ENCODE measurements at regions of chr19 and their contacts with region 1.

Region 1: DNA sequence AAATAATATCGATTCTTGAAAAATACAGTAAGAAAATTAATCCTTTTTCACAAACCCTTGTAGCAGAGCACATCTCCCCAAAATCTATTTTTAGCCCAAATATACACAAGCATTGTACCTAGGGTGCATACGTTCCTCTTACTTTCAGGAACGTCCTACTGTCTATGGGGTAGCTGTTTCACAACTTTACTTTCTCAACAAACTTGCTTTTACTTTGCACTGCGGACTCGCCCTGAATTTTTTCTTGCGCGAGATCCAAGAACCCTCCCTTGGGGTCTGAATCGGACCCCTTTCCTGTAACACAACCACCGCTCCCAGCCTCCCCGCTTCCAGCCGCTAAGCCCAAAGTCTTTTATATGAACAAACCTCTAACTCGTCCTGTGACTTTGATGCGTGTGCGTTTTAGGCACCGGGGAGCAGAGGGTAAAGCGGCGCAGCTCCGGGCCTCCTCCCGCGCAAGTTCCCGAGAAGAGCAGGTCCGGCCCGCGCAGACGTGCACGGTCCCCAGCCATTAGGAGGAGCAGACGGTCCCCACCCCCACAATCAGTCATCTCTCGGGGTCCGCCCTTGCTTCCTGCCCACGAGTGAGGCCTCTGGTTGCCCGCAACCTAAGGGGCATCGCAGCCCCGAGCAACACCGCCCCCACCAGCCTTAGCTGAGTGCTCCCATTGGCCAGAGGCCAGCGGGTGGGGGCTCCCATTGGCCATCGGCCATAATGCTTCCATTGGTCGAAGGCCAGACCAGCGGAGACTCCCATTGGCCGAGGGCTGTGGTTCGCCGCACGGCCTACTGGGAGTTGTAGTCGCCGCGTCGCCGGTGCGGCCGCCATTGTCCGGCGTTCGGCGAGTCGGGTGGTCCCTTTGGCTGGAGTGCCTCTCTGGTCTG is at the start of gene ZNF8:
- DNase-seq: peak; percentile 84 to 96 (median 93)
- ATAC-seq: peak; percentile 99
- H3K4me3 ChIP-seq: peak within 1 kb of the TSS; percentile 93
- H3K4me3 Mint-ChIP-seq: peak within 1 kb of the TSS; percentile 89 to 99 (median 95)
- H3K27ac ChIP-seq: peak within 1 kb of the TSS; percentile 80
- H3K27ac Mint-ChIP-seq: peak within 1 kb of the TSS; percentile 88 to 97 (median 96)
- H3K4me1 ChIP-seq: peaks cover 12 to 15% of the 10 kb centered on the region in 2 donors
- H3K4me1 Mint-ChIP-seq: peaks cover 28 to 63% (median 43%) of the 10 kb centered on the region in 7 donors
- H3K27me3 ChIP-seq: no peaks in the 10 kb centered on the region
- H3K27me3 Mint-ChIP-seq: no peaks in the 10 kb centered on the region
- total RNA-seq, gene ZNF8: 5.2 to 10.5 (median 10.0) TPM

Region 2: DNA sequence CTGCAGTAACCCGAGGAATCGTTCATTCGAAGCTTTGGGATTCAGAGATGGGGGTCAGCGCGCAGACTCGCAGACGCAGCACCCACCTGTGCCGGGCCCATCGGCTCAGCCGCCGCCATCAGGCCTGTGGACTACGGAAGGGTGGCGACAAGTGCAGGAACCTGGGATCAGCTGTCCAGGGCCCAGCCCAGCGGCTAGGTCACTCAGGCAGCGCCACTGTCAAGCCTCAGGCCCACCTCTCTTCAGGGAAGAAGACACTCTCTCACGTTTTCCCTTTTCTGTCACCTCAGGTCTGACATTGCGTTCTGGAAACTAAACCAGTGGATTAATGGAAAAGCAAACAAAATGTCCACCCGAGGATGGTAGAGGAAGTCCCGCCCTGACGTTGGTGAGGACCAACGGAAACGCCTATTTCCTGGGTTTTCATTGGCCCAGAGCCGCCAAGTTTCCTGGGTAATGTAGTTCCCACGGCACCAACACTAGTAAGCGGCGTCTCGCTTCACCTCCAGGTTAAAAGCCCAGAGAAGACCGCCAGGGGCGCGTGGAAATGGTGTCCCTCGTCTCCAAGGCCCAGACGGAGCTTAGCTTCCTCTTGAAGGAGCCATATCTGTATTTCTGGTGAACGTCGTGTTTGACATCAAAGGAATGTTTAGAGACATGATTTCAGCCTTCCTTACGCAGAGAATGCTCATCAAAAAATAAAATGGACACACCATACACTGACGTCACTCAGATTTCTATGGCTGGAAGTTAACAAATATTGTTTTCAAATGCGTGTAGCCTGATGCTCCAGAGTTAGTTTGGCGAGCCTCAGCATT is 801.0 kb before region 1 on chr19 and contains the start of gene ZNF772:
- CTCF ChIA-PET with region 1: no interaction called
- POLR2A ChIA-PET with region 1: no interaction called
- intact Hi-C with region 1: loop called in 1 of 2 experiments (anchors 5 kb)
- DNase-seq: peak; percentile 55 to 96 (median 88)
- ATAC-seq: peak; percentile 99
- H3K4me3 ChIP-seq: peak within 1 kb of the TSS; percentile 80
- H3K4me3 Mint-ChIP-seq: peak within 1 kb of the TSS; percentile 87 to 95 (median 92)
- H3K27ac ChIP-seq: peak within 1 kb of the TSS; percentile 77
- H3K27ac Mint-ChIP-seq: peak within 1 kb of the TSS; percentile 84 to 96 (median 89)
- H3K4me1 ChIP-seq: peaks cover 5 to 12% of the 10 kb centered on the region in 2 donors
- H3K4me1 Mint-ChIP-seq: peaks cover 10 to 26% (median 19%) of the 10 kb centered on the region in 7 donors
- H3K27me3 ChIP-seq: no peaks in the 10 kb centered on the region
- H3K27me3 Mint-ChIP-seq: peaks cover 0 to 7% (median 0%) of the 10 kb centered on the region in 5 donors
- total RNA-seq, gene ZNF772: 1.5 to 20.5 (median 4.3) TPM

Region 3: DNA sequence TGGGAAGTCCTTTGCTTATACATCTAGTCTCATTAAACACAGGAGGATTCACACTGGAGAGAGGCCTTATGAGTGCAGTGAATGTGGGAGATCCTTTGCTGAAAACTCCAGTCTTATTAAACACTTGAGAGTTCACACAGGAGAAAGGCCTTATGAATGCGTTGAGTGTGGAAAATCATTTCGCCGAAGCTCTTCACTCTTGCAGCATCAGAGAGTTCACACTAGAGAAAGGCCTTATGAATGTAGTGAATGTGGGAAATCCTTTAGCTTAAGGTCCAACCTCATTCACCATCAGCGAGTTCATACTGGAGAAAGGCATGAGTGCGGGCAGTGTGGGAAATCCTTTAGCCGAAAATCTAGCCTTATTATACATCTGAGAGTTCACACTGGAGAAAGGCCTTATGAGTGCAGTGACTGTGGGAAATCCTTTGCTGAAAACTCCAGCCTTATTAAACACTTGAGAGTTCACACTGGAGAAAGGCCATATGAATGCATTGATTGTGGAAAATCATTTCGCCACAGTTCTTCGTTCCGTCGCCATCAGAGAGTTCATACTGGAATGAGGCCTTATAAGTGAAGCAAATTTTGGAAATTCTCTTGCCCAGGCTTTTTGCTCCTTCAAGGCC is 499.1 kb before region 1 on chr19:
- CTCF ChIA-PET with region 1: no interaction called
- POLR2A ChIA-PET with region 1: no interaction called
- intact Hi-C with region 1: no loop called
- DNase-seq: no peak
- ATAC-seq: no peak
- H3K4me3 ChIP-seq: peak overlapping the region; percentile 38
- H3K4me3 Mint-ChIP-seq: peak overlapping the region in 1 of 10 donors; percentile 45
- H3K27ac ChIP-seq: no peak overlapping the region
- H3K27ac Mint-ChIP-seq: peak overlapping the region in 1 of 9 donors; percentile 17
- H3K4me1 ChIP-seq: no peaks in the 10 kb centered on the region
- H3K4me1 Mint-ChIP-seq: peaks cover 0 to 13% (median 3%) of the 10 kb centered on the region in 7 donors
- H3K27me3 ChIP-seq: no peaks in the 10 kb centered on the region
- H3K27me3 Mint-ChIP-seq: no peaks in the 10 kb centered on the region

Region 4: GRCh38 chr19:58097781-58098681 is 180.4 kb before region 1 on chr19 and contains the start of gene ZSCAN18:
- CTCF ChIA-PET with region 1: no interaction called
- POLR2A ChIA-PET with region 1: no interaction called
- intact Hi-C with region 1: loop called in 1 of 2 experiments (anchors 1 kb)
- DNase-seq: peak; percentile 77 to 100 (median 99)
- ATAC-seq: peak; percentile 97
- H3K4me3 ChIP-seq: peak within 1 kb of the TSS; percentile 86
- H3K4me3 Mint-ChIP-seq: peak within 1 kb of the TSS; percentile 83 to 100 (median 91)
- H3K27ac ChIP-seq: peak within 1 kb of the TSS; percentile 100
- H3K27ac Mint-ChIP-seq: peak within 1 kb of the TSS; percentile 98 to 100 (median 100)
- H3K4me1 ChIP-seq: peaks cover 0 to 11% of the 10 kb centered on the region in 2 donors
- H3K4me1 Mint-ChIP-seq: peaks cover 8 to 18% (median 15%) of the 10 kb centered on the region in 7 donors
- H3K27me3 ChIP-seq: no peaks in the 10 kb centered on the region
- H3K27me3 Mint-ChIP-seq: no peaks in the 10 kb centered on the region
- total RNA-seq, gene ZSCAN18: 8.2 to 100 (median 78.1) TPM

Region 5: DNA sequence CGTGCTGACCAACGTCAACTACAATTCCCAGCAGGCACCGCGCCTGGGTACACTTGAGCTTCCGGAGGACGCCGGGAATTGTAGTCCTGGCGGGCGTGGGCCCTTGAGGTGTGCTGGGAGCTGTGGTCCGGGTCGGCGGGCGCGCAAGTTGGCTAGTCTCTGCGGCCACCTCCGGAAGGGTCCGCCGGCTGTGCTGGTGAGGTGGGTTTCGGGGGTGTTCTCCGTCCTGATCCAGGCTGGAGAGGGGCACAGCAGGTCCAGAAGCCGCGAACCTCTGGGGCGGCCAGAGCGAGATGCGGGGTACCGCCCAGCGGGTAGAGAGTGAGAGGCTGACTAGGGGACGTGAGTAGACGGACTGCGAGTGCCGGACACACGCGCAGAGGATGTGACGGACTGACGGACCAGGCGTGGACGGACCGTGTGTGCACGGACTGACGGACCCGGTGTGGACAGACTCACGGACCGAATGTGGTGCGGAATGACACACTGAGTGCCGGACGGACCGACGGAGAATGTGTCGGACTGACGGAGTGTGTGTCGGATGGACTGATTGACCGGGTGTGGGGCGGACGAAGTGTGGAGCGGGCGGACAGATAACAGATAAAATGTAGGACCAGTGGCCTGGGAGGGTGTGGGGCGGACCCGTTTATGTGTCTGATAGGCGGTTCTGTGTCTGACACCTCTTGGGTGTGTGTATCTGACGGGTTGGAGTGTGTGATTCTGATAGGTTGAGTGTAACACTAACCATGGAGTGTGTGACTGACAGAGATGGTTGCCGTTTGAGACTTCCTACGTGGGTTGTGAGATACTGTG is 48.7 kb after region 1 on chr19 and contains the start of gene ZSCAN22:
- CTCF ChIA-PET with region 1: no interaction called
- POLR2A ChIA-PET with region 1: interaction called, 4 read pairs
- intact Hi-C with region 1: loop called (anchors 1 kb)
- DNase-seq: peak; percentile 65 to 89 (median 78)
- ATAC-seq: peak; percentile 90
- H3K4me3 ChIP-seq: peak within 1 kb of the TSS; percentile 95
- H3K4me3 Mint-ChIP-seq: no peak within 1 kb of the TSS
- H3K27ac ChIP-seq: peak within 1 kb of the TSS; percentile 72
- H3K27ac Mint-ChIP-seq: no peak within 1 kb of the TSS
- H3K4me1 ChIP-seq: peaks cover 14 to 16% of the 10 kb centered on the region in 2 donors
- H3K4me1 Mint-ChIP-seq: peaks cover 0 to 10% (median 6%) of the 10 kb centered on the region in 7 donors
- H3K27me3 ChIP-seq: no peaks in the 10 kb centered on the region
- H3K27me3 Mint-ChIP-seq: no peaks in the 10 kb centered on the region
- total RNA-seq, gene ZSCAN22: 1.1 to 6.0 (median 4.5) TPM

Region 6: GRCh38 chr19:58386576-58387337 is 108.4 kb after region 1 on chr19 and contains the start of gene RPS5:
- CTCF ChIA-PET with region 1: no interaction called
- POLR2A ChIA-PET with region 1: no interaction called
- intact Hi-C with region 1: loop called (anchors 1 kb)
- DNase-seq: peak; percentile 84 to 98 (median 96)
- ATAC-seq: peak; percentile 97
- H3K4me3 ChIP-seq: peak within 1 kb of the TSS; percentile 75
- H3K4me3 Mint-ChIP-seq: peak within 1 kb of the TSS; percentile 89 to 96 (median 94)
- H3K27ac ChIP-seq: peak within 1 kb of the TSS; percentile 94
- H3K27ac Mint-ChIP-seq: peak within 1 kb of the TSS; percentile 94 to 99 (median 97)
- H3K4me1 ChIP-seq: peaks cover 26% of the 10 kb centered on the region in 2 donors
- H3K4me1 Mint-ChIP-seq: peaks cover 22 to 59% (median 45%) of the 10 kb centered on the region in 7 donors
- H3K27me3 ChIP-seq: no peaks in the 10 kb centered on the region
- H3K27me3 Mint-ChIP-seq: peaks cover 0 to 3% (median 0%) of the 10 kb centered on the region in 5 donors
- total RNA-seq, gene RPS5: 911 to 1,684 (median 1,502) TPM

Region 7: DNA sequence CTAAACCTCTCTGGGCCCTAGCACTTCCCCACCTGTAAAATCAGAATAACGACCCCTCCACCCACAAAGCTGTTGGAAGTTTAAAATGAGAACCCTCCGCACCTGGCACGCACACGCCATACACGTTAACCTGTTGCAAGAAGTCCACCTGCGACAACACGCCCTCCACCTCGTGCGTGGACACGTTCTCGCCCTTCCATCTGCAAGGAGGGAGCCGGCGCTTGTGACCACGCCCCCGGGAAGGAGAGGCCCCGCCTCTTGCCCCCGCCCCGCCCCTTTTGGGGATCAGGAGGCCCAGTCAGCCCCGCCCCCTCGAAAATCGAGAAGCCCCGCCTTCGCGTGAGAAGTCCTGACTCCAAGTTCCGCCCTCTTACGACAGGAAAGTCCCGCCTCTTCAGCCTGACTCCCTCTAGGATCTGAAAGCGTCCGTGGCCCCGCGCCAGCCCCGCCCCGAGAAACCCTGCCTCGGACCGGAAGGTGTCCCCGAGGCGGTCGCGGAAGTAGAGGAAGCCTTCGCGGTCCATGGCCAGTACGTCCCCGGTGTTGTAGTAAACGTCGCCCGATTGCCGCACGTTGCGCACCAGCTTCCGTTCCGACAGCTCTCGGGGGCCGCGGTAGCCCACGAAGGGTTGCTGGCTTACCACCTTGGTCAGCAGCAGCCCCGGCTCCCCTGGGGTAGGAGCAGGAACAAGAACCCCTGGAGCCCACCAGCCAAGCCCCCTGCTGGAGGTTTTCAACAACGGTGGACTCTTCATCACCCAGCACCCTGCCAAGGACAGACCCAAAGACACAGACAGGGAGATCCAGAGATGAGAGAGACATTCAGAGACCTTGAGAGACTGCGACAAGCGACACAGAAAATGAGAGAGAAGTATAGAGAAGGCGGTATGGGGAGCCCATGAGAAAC is 220.9 kb after region 1 on chr19:
- CTCF ChIA-PET with region 1: no interaction called
- POLR2A ChIA-PET with region 1: no interaction called
- intact Hi-C with region 1: loop called in 1 of 2 experiments (anchors 1 kb)
- DNase-seq: peak; percentile 76 to 96 (median 87)
- ATAC-seq: peak; percentile 93
- H3K4me3 ChIP-seq: peak overlapping the region; percentile 66
- H3K4me3 Mint-ChIP-seq: peak overlapping the region; percentile 88 to 98 (median 94)
- H3K27ac ChIP-seq: peak overlapping the region; percentile 72
- H3K27ac Mint-ChIP-seq: peak overlapping the region; percentile 90 to 97 (median 95)
- H3K4me1 ChIP-seq: peaks cover 12 to 15% of the 10 kb centered on the region in 2 donors
- H3K4me1 Mint-ChIP-seq: peaks cover 8 to 32% (median 21%) of the 10 kb centered on the region in 7 donors
- H3K27me3 ChIP-seq: no peaks in the 10 kb centered on the region
- H3K27me3 Mint-ChIP-seq: no peaks in the 10 kb centered on the region

Region 8: GRCh38 chr19:58519355-58520256 is 241.2 kb after region 1 on chr19 and contains the start of gene ZBTB45:
- CTCF ChIA-PET with region 1: no interaction called
- POLR2A ChIA-PET with region 1: no interaction called
- intact Hi-C with region 1: no loop called
- DNase-seq: peak; percentile 81 to 97 (median 88)
- ATAC-seq: peak; percentile 89
- H3K4me3 ChIP-seq: peak within 1 kb of the TSS; percentile 76
- H3K4me3 Mint-ChIP-seq: peak within 1 kb of the TSS; percentile 90 to 97 (median 95)
- H3K27ac ChIP-seq: peak within 1 kb of the TSS; percentile 86
- H3K27ac Mint-ChIP-seq: peak within 1 kb of the TSS; percentile 92 to 99 (median 97)
- H3K4me1 ChIP-seq: peaks cover 10 to 14% of the 10 kb centered on the region in 2 donors
- H3K4me1 Mint-ChIP-seq: peaks cover 29 to 43% (median 37%) of the 10 kb centered on the region in 7 donors
- H3K27me3 ChIP-seq: no peaks in the 10 kb centered on the region
- H3K27me3 Mint-ChIP-seq: peaks cover 0 to 3% (median 0%) of the 10 kb centered on the region in 5 donors
- total RNA-seq, gene ZBTB45: 9.8 to 19.2 (median 17.0) TPM

Region 9: DNA sequence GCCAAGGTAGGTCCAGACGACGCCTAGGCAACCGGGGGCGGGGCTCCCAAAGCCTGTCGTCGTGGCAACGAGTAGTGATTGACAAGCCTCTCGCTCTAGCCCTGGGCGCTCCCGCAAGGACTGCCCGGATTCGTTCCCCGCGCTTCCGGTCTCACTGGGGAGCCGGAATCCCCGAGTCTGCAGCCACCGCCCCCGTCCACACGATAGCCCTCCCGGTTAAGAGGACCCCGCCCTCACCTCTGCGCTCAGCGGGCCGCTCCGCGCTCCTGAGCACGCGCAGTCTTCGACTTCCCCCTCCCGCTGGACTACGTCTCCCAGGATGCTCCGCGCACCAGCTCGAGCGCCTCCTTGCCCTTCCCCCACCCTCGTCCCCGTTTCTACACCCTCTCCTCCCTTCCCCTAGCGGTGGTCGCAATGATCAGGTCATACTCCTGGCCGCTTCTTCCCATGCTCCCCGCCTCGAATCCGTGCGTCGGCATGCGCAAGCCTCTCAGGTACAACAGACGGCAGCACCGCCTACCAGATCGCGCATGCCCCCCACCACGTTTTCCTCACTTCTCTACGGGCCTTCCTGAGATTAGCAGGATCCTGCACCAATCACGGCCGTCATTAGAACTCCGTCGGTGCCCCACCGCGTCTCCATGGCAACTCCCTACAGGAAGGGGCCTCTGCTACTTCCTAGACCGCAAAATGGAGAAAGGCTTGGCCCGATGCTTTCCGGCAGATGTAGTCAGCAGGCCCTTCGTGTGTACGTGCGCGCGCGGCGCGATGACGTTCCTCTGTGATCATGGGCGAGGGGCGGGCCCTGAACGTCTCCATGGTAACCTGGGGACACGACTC is 294.6 kb after region 1 on chr19 and contains the start of gene MZF1:
- CTCF ChIA-PET with region 1: no interaction called
- POLR2A ChIA-PET with region 1: no interaction called
- intact Hi-C with region 1: loop called in 1 of 2 experiments (anchors 1 kb)
- DNase-seq: peak; percentile 97 to 100 (median 100)
- ATAC-seq: peak; percentile 81
- H3K4me3 ChIP-seq: peak within 1 kb of the TSS; percentile 71
- H3K4me3 Mint-ChIP-seq: peak within 1 kb of the TSS; percentile 82 to 100 (median 98)
- H3K27ac ChIP-seq: peak within 1 kb of the TSS; percentile 97
- H3K27ac Mint-ChIP-seq: peak within 1 kb of the TSS; percentile 97 to 100 (median 100)
- H3K4me1 ChIP-seq: peaks cover 19 to 20% of the 10 kb centered on the region in 2 donors
- H3K4me1 Mint-ChIP-seq: peaks cover 27 to 50% (median 33%) of the 10 kb centered on the region in 7 donors
- H3K27me3 ChIP-seq: no peaks in the 10 kb centered on the region
- H3K27me3 Mint-ChIP-seq: peaks cover 0 to 4% (median 0%) of the 10 kb centered on the region in 5 donors
- total RNA-seq, gene MZF1: 35.0 to 51.8 (median 44.9) TPM